CD8-positive, alpha-beta T cell (primary cell): ENCODE measurements at regions of chr7 and their contacts with region 1.

Region 1: GRCh38 chr7:130896898-130897514 is 163.0 kb upstream of the KLF14 start:
- DNase-seq: peak; percentile 51 to 89 (median 70)
- ATAC-seq: peak; percentile 70
- H3K4me3 ChIP-seq: no peak overlapping the region
- H3K4me3 Mint-ChIP-seq: no peak overlapping the region
- H3K27ac ChIP-seq: peak overlapping the region in 1 of 2 experiments; percentile 18
- H3K27ac Mint-ChIP-seq: peak overlapping the region; percentile 24
- H3K4me1 ChIP-seq: peaks cover 38% of the 10 kb centered on the region
- H3K4me1 Mint-ChIP-seq: peaks cover 70% of the 10 kb centered on the region
- H3K27me3 ChIP-seq: no peaks in the 10 kb centered on the region
- H3K27me3 Mint-ChIP-seq: no peaks in the 10 kb centered on the region
- CTCF ChIP-seq: peak; percentile 79

Region 2: DNA sequence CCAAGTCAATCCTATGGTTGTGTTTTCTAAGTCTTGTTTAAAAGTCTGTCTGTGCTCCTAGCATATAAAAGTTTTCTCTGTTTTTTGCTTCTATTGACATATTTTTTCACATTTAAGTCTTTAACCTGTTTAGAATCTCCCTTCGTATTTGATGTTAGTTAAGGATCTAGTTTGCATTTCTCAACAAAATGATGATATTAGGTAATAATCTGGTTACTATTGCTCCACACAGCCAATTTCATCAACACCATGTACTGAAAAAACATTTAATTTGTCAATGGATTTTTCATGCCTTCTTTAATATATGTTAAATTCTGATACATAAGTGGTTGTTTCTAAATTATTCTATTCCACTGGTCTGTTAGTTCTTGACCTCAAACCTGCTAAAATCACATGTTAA is 193.2 kb before region 1 on chr7:
- CTCF ChIA-PET with region 1: no interaction called
- POLR2A ChIA-PET with region 1: no interaction called
- intact Hi-C with region 1: no loop called
- DNase-seq: no peak
- ATAC-seq: no peak
- H3K4me3 ChIP-seq: no peak overlapping the region
- H3K4me3 Mint-ChIP-seq: no peak overlapping the region
- H3K27ac ChIP-seq: no peak overlapping the region
- H3K27ac Mint-ChIP-seq: no peak overlapping the region
- H3K4me1 ChIP-seq: no peaks in the 10 kb centered on the region
- H3K4me1 Mint-ChIP-seq: no peaks in the 10 kb centered on the region
- H3K27me3 ChIP-seq: no peaks in the 10 kb centered on the region
- H3K27me3 Mint-ChIP-seq: peaks cover 27% of the 10 kb centered on the region
- CTCF ChIP-seq: no peak

Region 3: GRCh38 chr7:130777426-130777825 is 119.6 kb before region 1 on chr7:
- CTCF ChIA-PET with region 1: no interaction called
- POLR2A ChIA-PET with region 1: no interaction called
- intact Hi-C with region 1: no loop called
- DNase-seq: no peak
- ATAC-seq: no peak
- H3K4me3 ChIP-seq: no peak overlapping the region
- H3K4me3 Mint-ChIP-seq: no peak overlapping the region
- H3K27ac ChIP-seq: no peak overlapping the region
- H3K27ac Mint-ChIP-seq: no peak overlapping the region
- H3K4me1 ChIP-seq: no peaks in the 10 kb centered on the region
- H3K4me1 Mint-ChIP-seq: no peaks in the 10 kb centered on the region
- H3K27me3 ChIP-seq: no peaks in the 10 kb centered on the region
- H3K27me3 Mint-ChIP-seq: peaks cover 38% of the 10 kb centered on the region
- CTCF ChIP-seq: no peak

Region 4: GRCh38 chr7:130814778-130815335 is 82.1 kb before region 1 on chr7:
- CTCF ChIA-PET with region 1: no interaction called
- POLR2A ChIA-PET with region 1: no interaction called
- intact Hi-C with region 1: no loop called
- DNase-seq: peak in 2 of 9 experiments; percentile 13 to 32
- ATAC-seq: no peak
- H3K4me3 ChIP-seq: no peak overlapping the region
- H3K4me3 Mint-ChIP-seq: no peak overlapping the region
- H3K27ac ChIP-seq: no peak overlapping the region
- H3K27ac Mint-ChIP-seq: no peak overlapping the region
- H3K4me1 ChIP-seq: no peaks in the 10 kb centered on the region
- H3K4me1 Mint-ChIP-seq: no peaks in the 10 kb centered on the region
- H3K27me3 ChIP-seq: no peaks in the 10 kb centered on the region
- H3K27me3 Mint-ChIP-seq: no peaks in the 10 kb centered on the region
- CTCF ChIP-seq: peak; percentile 28

Region 5: GRCh38 chr7:130929896-130930659 is 33.1 kb after region 1 on chr7:
- CTCF ChIA-PET with region 1: interaction called, 14 read pairs
- POLR2A ChIA-PET with region 1: no interaction called
- intact Hi-C with region 1: no loop called
- DNase-seq: peak in 2 of 9 experiments; percentile 42 to 59
- ATAC-seq: peak; percentile 43
- H3K4me3 ChIP-seq: no peak overlapping the region
- H3K4me3 Mint-ChIP-seq: no peak overlapping the region
- H3K27ac ChIP-seq: peak overlapping the region in 1 of 2 experiments; percentile 40
- H3K27ac Mint-ChIP-seq: peak overlapping the region; percentile 67
- H3K4me1 ChIP-seq: peaks cover 46% of the 10 kb centered on the region
- H3K4me1 Mint-ChIP-seq: peaks cover 89% of the 10 kb centered on the region
- H3K27me3 ChIP-seq: no peaks in the 10 kb centered on the region
- H3K27me3 Mint-ChIP-seq: no peaks in the 10 kb centered on the region
- CTCF ChIP-seq: no peak

Region 6: GRCh38 chr7:130988443-130988842 is 91.4 kb after region 1 on chr7:
- CTCF ChIA-PET with region 1: interaction called, 45 read pairs
- POLR2A ChIA-PET with region 1: interaction called, 3 read pairs
- intact Hi-C with region 1: loop called (anchors 5 kb)
- DNase-seq: peak in 2 of 9 experiments; percentile 65 to 75
- ATAC-seq: peak; percentile 15
- H3K4me3 ChIP-seq: no peak overlapping the region
- H3K4me3 Mint-ChIP-seq: peak overlapping the region; percentile 2
- H3K27ac ChIP-seq: peak overlapping the region; percentile 16 to 63
- H3K27ac Mint-ChIP-seq: peak overlapping the region; percentile 73
- H3K4me1 ChIP-seq: peaks cover 76% of the 10 kb centered on the region
- H3K4me1 Mint-ChIP-seq: peaks cover 49% of the 10 kb centered on the region
- H3K27me3 ChIP-seq: no peaks in the 10 kb centered on the region
- H3K27me3 Mint-ChIP-seq: no peaks in the 10 kb centered on the region
- CTCF ChIP-seq: no peak

Region 7: DNA sequence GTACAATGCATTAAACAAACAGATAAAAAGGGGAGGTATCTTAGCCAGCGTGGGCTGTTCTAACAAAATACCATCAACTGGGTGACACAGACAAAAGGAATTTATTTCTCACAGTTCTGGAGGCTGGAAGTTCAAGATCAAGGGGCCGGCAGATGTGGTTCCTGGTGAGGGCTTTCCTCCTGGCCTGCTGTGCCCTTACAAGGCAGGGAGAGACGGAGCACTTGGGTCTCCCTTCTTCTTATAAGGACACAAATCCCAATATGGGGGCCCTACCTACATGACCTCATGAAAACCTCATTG is 118.6 kb after region 1 on chr7:
- CTCF ChIA-PET with region 1: interaction called, 11 read pairs
- POLR2A ChIA-PET with region 1: interaction called, 3 read pairs
- intact Hi-C with region 1: no loop called
- DNase-seq: peak in 1 of 9 experiments; percentile 23
- ATAC-seq: no peak
- H3K4me3 ChIP-seq: no peak overlapping the region
- H3K4me3 Mint-ChIP-seq: no peak overlapping the region
- H3K27ac ChIP-seq: peak overlapping the region in 1 of 2 experiments; percentile 27
- H3K27ac Mint-ChIP-seq: no peak overlapping the region
- H3K4me1 ChIP-seq: peaks cover 71% of the 10 kb centered on the region
- H3K4me1 Mint-ChIP-seq: peaks cover 94% of the 10 kb centered on the region
- H3K27me3 ChIP-seq: no peaks in the 10 kb centered on the region
- H3K27me3 Mint-ChIP-seq: no peaks in the 10 kb centered on the region
- CTCF ChIP-seq: no peak

Region 8: GRCh38 chr7:131424219-131424822 is 527.3 kb after region 1 on chr7:
- CTCF ChIA-PET with region 1: interaction called, 7 read pairs
- POLR2A ChIA-PET with region 1: no interaction called
- intact Hi-C with region 1: loop called (anchors 2 kb)
- DNase-seq: peak in 2 of 9 experiments; percentile 48 to 62
- ATAC-seq: peak; percentile 97
- H3K4me3 ChIP-seq: no peak overlapping the region
- H3K4me3 Mint-ChIP-seq: no peak overlapping the region
- H3K27ac ChIP-seq: no peak overlapping the region
- H3K27ac Mint-ChIP-seq: no peak overlapping the region
- H3K4me1 ChIP-seq: no peaks in the 10 kb centered on the region
- H3K4me1 Mint-ChIP-seq: peaks cover 5% of the 10 kb centered on the region
- H3K27me3 ChIP-seq: no peaks in the 10 kb centered on the region
- H3K27me3 Mint-ChIP-seq: no peaks in the 10 kb centered on the region
- CTCF ChIP-seq: peak; percentile 74

Region 9: DNA sequence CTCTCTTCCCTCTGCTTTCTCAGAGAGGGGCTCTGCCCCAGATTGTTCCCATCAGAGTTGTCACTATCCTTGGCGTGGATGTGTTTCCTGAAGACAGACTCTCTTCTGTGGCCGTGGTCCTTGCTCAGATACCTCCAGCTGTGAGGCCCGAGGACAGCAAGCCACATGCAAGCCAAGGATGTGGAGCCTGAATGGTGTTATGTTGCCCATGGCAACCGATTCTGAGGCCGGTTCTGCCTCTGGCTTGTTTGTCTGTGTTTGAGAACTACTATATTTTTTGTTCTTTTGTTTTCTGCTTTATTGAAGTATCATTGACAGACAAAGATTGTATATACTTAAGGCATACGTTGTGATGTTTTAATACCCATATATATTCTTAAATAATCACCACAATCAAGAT is 906.9 kb after region 1 on chr7:
- CTCF ChIA-PET with region 1: no interaction called
- POLR2A ChIA-PET with region 1: no interaction called
- intact Hi-C with region 1: no loop called
- DNase-seq: no peak
- ATAC-seq: no peak
- H3K4me3 ChIP-seq: no peak overlapping the region
- H3K4me3 Mint-ChIP-seq: no peak overlapping the region
- H3K27ac ChIP-seq: no peak overlapping the region
- H3K27ac Mint-ChIP-seq: no peak overlapping the region
- H3K4me1 ChIP-seq: no peaks in the 10 kb centered on the region
- H3K4me1 Mint-ChIP-seq: no peaks in the 10 kb centered on the region
- H3K27me3 ChIP-seq: no peaks in the 10 kb centered on the region
- H3K27me3 Mint-ChIP-seq: peaks cover 13% of the 10 kb centered on the region
- CTCF ChIP-seq: no peak